RWPE1 (cell line): ENCODE measurements at regions of chr11 and their contacts with region 1.

Region 1: DNA sequence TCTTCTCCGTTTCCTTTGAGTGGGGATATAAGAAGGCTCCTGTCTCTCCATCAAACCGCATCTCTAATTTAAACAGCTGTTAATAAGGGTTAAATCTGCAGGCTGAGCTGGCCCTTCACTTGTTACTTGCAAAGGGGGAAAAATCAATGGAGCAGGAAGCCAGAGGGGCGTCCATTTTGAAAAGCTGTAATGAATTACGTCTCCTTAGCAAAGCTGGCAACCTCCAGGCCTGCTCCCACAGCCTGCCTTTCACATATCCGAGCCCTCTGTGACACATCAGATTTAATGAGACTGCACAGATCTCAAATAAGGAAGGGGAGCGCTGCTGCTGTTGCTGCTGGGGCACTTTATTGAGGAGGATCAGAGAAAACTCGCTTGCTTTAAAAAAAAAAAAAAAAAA is 320.8 kb downstream of the BLID start:
- DNase-seq: no peak
- H3K27ac ChIP-seq: no peak overlapping the region
- CTCF ChIP-seq: no peak

Region 2: GRCh38 chr11:122383186-122383585 is 588.0 kb after region 1 on chr11:
- CTCF ChIA-PET with region 1: no interaction called
- POLR2A ChIA-PET with region 1: interaction called, 14 read pairs
- DNase-seq: no peak
- H3K27ac ChIP-seq: no peak overlapping the region
- CTCF ChIP-seq: no peak